BJ (cell line): ENCODE measurements at regions of chr3 and their contacts with region 1.

Region 1: DNA sequence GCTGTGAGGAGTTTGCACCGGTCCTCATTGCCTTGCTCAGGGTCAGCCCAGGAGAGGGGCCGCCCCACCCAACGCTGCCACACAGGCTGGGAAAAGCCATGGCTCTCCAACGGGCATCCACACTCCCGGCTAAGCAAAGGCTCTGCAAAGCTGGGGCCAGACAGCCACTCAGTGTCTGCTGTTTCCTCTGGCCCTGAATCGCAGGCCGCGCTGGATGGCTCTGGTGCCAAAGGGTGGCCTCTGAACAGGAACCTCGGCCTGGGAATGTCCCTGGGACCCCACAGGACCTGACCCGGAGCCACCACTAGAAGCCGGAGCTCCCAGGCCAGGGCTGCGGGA is 42.9 kb downstream of the RPN1 start:
- DNase-seq: no peak
- H3K4me3 ChIP-seq: peak overlapping the region; percentile 50; the same call in 1 of the 2 replicates
- H3K27me3 ChIP-seq: no peaks in the 10 kb centered on the region
- CTCF ChIP-seq: no peak

Region 2: DNA sequence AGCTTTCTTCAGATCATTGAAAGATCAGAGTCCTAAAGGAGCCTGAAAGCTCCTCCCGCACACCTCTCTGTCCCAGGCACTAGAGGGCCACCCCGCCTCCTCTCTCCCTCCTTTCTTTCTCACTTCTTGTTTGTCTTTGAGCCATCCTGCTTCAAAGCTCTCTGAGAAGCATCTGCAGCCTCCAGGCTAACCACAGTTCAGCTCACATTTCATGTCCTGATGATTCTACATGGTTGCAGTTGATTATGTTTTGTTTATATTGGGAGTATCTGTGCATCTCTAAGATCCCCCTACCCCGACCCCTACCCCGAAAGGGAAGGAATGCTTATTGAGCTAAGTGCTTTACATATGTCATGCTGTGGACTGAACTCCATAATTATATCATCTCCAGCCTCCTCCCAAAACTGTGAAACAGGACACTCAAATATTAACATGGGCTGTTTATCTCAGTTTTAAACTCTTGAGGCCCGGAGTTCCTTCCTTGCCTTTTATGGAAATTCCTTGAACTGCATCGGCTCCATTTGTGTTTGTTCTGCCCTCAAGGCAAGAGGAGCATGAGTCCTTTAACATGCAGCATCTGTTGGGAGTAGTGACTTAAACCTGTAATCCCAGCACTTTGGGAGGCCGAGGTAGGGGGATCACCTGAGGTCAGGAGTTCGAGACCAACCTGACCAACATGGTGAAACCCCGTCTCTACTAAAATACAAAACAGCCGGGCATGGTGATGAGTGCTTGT is 816.3 kb before region 1 on chr3:
- CTCF ChIA-PET with region 1: no interaction called
- POLR2A ChIA-PET with region 1: no interaction called
- DNase-seq: peak; percentile 59
- H3K4me3 ChIP-seq: no peak overlapping the region
- H3K27me3 ChIP-seq: no peaks in the 10 kb centered on the region
- CTCF ChIP-seq: peak; percentile 33

Region 3: DNA sequence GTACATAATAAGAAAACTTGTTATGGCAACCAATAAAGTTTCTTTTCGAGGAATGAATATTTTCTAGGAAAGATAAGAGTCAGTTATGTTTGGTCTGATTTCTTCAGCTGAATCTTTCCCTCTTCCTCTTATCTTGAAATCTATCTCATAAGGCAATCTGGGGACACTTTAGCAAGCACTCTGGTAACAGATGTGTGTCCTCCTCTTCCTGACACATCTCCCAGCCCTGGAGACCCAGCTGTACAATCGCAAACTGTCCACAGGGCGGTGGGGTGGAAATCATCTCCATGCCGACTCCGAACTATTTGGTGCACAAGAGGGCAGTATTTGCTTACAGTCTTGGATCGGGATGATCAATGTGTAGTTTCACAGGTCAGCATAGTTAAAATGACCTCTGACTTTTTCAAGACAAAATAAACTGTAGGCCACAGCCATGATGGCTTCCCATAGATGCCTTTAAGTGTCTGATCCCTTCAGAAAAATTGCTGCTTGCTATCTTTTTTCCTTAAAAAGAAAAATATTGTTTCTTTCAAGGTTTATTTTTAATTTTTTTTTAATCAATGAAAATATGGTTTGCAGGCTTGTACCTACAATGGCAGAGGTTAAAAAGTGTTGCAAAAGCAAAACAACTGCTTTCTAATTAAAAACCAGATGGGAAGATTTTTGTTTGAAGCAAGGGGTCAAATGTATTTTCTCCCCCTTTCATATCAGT is 436.7 kb before region 1 on chr3:
- CTCF ChIA-PET with region 1: interaction called, 10 read pairs
- POLR2A ChIA-PET with region 1: no interaction called
- DNase-seq: peak; percentile 39
- H3K4me3 ChIP-seq: no peak overlapping the region
- H3K27me3 ChIP-seq: no peaks in the 10 kb centered on the region
- CTCF ChIP-seq: peak; percentile 91

Region 4: DNA sequence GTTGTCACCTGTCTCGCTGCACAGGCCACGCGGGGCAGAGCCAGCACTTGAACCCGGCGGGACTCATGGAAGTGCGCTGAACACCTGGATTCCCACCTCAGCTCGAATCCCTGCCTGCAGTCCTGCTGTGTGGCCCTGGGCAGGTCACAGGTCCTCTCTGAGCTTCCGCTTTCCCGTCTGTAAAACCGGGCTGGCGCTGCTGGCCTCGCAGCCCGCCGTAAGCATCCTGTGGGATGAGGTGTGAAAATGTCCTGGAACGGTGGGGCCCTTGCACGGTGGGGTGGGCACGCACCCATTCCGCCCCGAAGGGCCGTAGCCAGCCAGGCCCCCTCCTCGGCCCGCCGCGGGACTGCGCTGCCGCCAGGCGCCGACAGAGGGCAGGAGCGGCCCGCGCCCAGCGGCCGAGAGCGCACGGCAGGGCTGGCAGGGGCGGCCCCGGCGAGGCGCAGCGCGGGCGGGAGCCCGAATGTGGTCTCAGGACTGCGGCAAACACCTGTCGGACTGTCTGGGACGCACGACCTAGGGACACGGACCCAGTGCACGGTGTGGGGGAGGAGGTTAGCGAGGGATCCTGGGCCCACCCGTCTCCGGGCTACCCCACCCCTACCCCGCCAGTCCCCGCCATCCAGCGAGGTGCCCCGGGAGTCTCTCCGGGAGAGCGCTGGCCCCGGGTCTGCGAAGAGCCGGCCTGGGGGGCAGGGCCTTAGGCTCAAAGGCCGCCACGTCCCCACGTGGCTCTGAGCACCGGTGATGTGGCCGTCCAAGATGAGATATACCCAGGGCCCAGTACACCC is 181.4 kb before region 1 on chr3:
- CTCF ChIA-PET with region 1: interaction called, 85 read pairs
- POLR2A ChIA-PET with region 1: no interaction called
- DNase-seq: no peak
- H3K4me3 ChIP-seq: peak overlapping the region; percentile 27
- H3K27me3 ChIP-seq: 0 out of 2 replicates have a peak, but pooled peaks cover 2% of the 10 kb centered on the region
- CTCF ChIP-seq: peak; percentile 48

Region 5: DNA sequence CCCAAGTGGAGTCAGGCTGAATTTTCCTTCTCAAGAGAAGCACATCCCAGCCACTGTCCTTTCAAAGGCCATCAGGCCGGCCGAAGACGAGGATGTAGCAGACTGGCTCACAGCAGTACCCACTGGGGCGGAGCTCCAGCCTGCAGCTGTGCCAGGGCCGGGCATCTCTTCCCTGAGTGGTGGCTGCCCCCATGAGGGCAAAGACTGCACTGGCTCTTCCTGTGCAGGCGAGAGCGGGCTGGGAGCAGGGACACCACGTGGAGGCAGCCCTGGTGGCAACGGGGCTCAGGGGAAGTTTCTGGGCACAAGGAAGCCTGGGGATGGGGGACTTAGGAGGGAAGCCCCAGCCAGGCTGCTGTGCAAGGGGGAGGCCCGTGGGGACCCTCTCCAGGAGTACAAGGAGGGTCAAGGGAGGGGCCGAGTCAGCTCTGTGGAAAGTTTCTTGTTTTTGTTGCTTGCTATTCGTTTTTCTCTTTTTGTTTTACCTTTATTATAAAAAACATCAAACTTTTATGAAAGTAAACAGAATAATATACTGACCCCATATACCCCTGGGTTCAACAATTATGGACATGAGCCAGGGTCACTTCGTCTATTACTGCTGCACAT is 23.2 kb before region 1 on chr3:
- CTCF ChIA-PET with region 1: interaction called, 23 read pairs
- POLR2A ChIA-PET with region 1: no interaction called
- DNase-seq: no peak
- H3K4me3 ChIP-seq: no peak overlapping the region
- H3K27me3 ChIP-seq: peaks cover 2% of the 10 kb centered on the region; the same call in 1 of the 2 replicates
- CTCF ChIP-seq: peak; percentile 85

Region 6: GRCh38 chr3:128617557-128618397 is 10.1 kb after region 1 on chr3:
- CTCF ChIA-PET with region 1: interaction called, 38 read pairs
- POLR2A ChIA-PET with region 1: no interaction called
- DNase-seq: peak; percentile 71
- H3K4me3 ChIP-seq: peak overlapping the region; percentile 62
- H3K27me3 ChIP-seq: no peaks in the 10 kb centered on the region
- CTCF ChIP-seq: peak; percentile 95

Region 7: DNA sequence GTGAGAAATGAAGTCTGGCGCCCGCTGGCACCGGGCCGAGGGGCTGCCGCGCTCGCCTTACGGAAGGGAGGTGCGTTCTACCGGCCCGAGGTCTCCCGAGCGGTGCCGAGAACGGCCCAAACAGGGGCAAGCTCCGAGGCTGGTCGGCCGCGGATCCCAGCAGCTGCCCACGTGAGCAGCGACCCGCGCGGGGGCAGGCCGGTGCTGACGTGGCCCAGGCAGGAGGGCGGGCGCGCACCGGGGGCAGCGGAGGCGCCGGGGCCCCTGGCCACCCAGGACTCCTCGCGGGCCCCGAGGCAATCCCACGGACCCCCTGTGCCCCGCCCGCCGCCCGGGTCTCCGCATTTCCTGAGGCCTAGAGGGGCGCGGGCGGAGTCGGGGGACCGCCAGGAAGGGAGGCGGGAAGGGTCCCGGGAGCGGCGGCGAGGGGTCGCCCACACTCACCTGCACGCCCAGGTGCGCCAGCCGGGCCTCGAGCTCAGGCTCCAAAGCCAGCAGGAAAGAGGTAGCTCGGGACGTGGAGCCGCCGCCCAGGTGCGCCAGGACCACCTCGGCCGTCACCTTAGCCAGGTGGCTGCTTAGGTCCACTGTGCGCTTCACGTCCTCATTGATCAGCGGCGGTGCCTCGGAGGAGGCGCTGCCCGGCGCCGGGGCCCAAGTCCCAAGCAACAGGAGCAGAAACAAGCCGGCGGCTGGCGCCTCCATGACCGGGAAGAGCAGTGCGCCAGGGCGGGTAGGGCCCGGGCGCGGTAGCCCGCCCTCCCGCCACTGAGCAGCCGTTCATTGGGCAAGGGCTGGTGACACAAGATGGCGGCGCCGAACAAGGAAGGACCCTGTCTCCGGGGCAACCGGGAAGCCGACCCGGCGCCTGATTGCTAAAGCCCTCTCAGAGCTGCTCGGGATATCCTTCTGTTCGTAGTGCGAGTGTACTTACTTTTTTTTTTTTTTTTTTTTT is 42.7 kb after region 1 on chr3 and contains the start of gene RPN1:
- CTCF ChIA-PET with region 1: no interaction called
- POLR2A ChIA-PET with region 1: no interaction called
- DNase-seq: peak; percentile 76
- H3K4me3 ChIP-seq: peak within 1 kb of the TSS; percentile 100
- H3K27me3 ChIP-seq: no peaks in the 10 kb centered on the region
- CTCF ChIP-seq: no peak
- polyA plus RNA-seq, gene RPN1: 370 and 463 TPM in 2 replicates